ENCODE measurements at regions of chr20 and their contacts with region 1.

Region 1: DNA sequence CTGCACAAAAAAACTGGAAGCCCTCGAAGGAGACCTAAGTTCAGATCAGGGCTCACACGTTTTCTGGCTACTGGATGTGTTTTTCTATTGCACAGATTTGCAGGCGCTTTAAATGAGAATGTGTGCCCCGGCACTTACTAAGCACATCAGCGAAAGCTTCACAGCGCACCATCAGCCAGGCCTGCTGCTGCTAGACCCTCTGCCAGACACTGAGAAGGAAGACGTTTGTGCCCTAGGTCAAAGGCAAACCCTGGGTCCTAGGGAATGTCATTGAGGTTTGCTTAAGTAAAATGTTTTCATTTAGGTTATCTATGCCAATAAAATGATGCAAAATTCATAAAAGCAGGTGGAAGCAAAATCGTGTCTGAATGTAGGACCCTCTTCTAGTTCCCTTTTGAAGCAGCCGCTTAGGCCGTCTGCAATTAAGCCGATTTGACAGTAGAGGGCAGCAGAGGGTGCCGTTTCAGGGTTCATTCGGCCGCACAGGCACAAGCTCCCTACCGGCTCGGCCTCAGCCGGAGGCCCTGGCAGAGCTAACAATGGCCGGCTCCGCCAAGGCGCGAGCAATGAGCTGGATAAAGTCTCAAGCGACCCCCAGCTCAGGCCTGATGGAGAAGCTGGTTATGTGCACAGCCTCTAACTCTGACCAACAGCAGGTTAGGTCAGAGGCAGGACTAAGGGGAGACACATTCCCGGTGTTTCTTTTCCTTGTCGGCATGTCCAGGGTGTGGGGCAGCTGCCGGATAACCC is 107.2 kb upstream of the FOXA2 start:
- DNase-seq: peak; percentile 66 to 91 (median 82)
- H3K4me3 ChIP-seq: no peak overlapping the region
- H3K27ac ChIP-seq: no peak overlapping the region
- H3K4me1 ChIP-seq: peaks cover 0 to 7% of the 10 kb centered on the region in 2 donors
- H3K27me3 ChIP-seq: no peaks in the 10 kb centered on the region
- CTCF ChIP-seq: peak; percentile 82 to 96 (median 90)
- POLR2A ChIP-seq: no peak

Region 2: DNA sequence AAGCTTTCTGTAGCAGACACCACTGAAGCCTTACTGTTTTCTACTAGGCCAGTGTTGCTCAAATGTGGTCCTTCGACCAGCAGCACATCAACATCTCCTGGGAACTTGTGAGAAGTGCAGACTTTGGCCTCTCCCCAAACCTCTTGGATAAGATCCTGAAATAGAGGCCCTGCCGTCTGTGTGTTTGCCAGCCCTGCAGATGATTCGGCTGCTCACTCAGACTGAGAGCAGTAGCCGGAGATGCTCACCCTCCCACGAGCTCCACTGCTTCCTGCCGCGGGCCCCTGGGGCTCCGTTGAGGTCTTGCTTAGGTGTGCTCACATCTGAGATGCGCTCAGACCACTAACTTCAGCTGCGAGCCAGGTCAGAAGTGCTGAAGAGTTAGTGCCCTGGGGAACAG is 214.1 kb after region 1 on chr20:
- intact Hi-C with region 1: no loop called
- DNase-seq: peak in 2 of 7 donors; percentile 8 to 28
- H3K4me3 ChIP-seq: no peak overlapping the region
- H3K27ac ChIP-seq: no peak overlapping the region
- H3K4me1 ChIP-seq: no peaks in the 10 kb centered on the region
- H3K27me3 ChIP-seq: peaks cover 8% of the 10 kb centered on the region
- CTCF ChIP-seq: no peak
- POLR2A ChIP-seq: no peak

Region 3: GRCh38 chr20:22974353-22974752 is 282.8 kb after region 1 on chr20:
- intact Hi-C with region 1: loop called in 1 of 2 experiments (anchors 10 kb)
- DNase-seq: peak in 1 of 7 donors; percentile 28
- H3K4me3 ChIP-seq: no peak overlapping the region
- H3K27ac ChIP-seq: no peak overlapping the region
- H3K4me1 ChIP-seq: peaks cover 0 to 8% of the 10 kb centered on the region in 2 donors
- H3K27me3 ChIP-seq: peaks cover 7% of the 10 kb centered on the region
- CTCF ChIP-seq: peak in 4 of 6 experiments; percentile 14 to 38 (median 29)
- POLR2A ChIP-seq: no peak

Region 4: DNA sequence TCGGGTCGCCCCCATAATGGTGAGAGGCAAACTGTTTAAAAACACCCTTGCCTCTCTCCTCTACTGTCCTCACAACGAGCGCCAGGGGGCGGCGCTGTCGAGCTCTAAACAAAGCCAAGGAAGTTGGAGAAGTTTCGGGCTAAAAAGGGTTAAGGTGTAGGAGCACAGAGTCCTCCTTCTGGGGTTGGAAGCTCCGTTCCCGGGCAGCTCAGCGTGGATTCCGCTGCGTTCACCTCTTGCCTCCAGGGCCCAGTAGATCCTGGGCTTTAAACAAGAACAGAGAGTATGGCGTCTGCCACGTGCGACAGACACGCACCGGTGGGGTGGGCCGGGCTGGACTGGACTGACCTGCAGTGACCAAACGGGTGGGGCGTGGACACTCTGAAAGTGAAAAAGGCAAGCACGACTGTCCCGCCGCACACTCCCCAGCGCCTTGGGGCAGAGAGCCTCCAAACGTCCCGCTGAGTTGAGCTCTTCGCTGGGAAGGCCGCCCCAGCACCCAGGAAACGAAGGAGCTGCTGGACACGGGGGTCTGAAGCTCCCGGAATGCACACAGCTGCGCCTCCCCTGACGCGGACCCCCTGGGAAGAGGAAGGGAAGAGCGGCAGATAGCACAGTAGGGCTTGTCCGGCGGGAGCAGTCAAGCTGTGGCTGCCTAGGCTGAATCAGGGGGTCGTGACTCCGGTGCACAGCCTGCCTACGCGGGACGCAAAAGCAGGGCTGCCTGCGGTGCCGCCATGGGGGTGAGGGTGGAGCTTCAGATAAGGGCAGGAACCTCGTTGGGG is 359.5 kb after region 1 on chr20:
- intact Hi-C with region 1: loop called (anchors 10 kb)
- DNase-seq: peak; percentile 63 to 82 (median 67)
- H3K4me3 ChIP-seq: peak overlapping the region in 2 of 4 donors; percentile 9 to 56
- H3K27ac ChIP-seq: peak overlapping the region in 4 of 5 donors; percentile 36 to 86 (median 58)
- H3K4me1 ChIP-seq: peaks cover 24 to 45% of the 10 kb centered on the region in 2 donors
- H3K27me3 ChIP-seq: peaks cover 14% of the 10 kb centered on the region
- CTCF ChIP-seq: peak; percentile 35 to 68 (median 59)
- POLR2A ChIP-seq: no peak

Region 5: DNA sequence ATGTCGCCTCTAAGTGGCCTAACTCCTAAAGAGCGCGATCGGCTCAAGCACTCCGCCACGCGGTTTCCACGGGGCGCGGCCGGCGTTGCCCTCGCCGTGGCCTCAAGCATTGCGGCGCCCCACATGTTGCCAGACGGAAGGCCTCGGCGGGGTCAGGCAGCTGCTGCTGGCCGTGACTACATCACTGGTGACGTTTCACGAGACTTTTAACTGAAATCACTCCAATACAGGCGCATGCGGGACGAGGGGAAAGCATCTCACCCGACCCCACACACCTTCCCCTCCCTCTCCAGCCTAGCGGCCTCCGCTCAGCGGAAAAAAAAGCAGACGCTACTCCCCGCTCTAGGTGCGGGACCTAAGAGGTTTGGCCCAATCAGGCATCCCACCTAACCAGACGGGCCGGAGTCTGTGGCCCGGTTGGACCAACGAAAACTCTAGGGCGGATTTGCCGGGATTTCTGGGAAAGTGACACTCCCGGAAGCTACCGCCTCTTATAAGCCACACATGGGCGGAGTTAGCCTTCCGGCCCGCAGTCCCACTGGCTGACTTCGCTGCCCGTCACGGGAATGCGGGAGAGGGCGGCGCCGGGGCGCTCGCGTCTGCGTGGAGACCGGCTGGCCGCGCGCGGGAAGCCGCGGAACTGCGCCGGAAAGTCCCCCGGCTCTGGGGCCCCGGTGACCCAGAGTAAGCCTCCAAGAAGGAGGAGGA is 658.8 kb after region 1 on chr20 and contains the start of gene NXT1:
- intact Hi-C with region 1: loop called (anchors 5 to 10 kb)
- DNase-seq: peak; percentile 98 to 99 (median 98)
- H3K4me3 ChIP-seq: peak within 1 kb of the TSS; percentile 61 to 96 (median 79)
- H3K27ac ChIP-seq: peak within 1 kb of the TSS; percentile 95 to 100 (median 99)
- H3K4me1 ChIP-seq: peaks cover 0 to 24% of the 10 kb centered on the region in 2 donors
- H3K27me3 ChIP-seq: no peaks in the 10 kb centered on the region
- CTCF ChIP-seq: no peak
- POLR2A ChIP-seq: peak; percentile 81 to 93
- total RNA-seq, gene NXT1: 11.1 to 43.8 (median 17.9) TPM

Measured in adrenal gland (tissue), 19 donors.